ENCODE measurements at regions of chr17 and their contacts with region 1.

Region 1: DNA sequence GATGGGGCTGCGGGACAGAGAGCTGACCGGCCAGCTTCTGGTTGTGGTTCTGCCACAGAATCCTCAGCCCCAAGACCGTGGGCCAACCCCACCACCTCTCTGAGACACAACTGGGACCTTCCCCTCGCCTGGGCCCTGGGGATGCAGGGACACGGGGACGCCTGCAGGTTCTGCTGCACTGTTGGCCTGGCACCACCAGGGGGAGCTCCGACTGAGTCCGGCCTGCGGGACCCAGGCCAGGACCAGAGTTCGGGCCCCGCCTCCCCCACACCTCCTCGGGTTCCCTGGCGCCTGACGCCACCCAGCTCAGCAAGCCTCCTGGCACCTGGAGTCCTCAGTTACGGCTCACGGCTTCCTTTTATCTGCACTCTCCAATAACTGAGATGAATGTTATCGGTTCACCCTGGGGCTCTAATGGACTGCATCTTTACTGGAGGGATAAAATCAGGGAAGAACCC is 27.3 kb downstream of the TBC1D16 start:
- DNase-seq: peak; percentile 63 to 83
- ATAC-seq: peak; percentile 57 to 86 (median 78)
- H3K4me3 ChIP-seq: no peak overlapping the region
- H3K27ac ChIP-seq: no peak overlapping the region
- H3K4me1 ChIP-seq: peaks cover 0 to 18% (median 8%) of the 10 kb centered on the region in 9 donors
- H3K27me3 ChIP-seq: no peaks in the 10 kb centered on the region
- CTCF ChIP-seq: peak; percentile 82 to 97 (median 93)

Region 2: DNA sequence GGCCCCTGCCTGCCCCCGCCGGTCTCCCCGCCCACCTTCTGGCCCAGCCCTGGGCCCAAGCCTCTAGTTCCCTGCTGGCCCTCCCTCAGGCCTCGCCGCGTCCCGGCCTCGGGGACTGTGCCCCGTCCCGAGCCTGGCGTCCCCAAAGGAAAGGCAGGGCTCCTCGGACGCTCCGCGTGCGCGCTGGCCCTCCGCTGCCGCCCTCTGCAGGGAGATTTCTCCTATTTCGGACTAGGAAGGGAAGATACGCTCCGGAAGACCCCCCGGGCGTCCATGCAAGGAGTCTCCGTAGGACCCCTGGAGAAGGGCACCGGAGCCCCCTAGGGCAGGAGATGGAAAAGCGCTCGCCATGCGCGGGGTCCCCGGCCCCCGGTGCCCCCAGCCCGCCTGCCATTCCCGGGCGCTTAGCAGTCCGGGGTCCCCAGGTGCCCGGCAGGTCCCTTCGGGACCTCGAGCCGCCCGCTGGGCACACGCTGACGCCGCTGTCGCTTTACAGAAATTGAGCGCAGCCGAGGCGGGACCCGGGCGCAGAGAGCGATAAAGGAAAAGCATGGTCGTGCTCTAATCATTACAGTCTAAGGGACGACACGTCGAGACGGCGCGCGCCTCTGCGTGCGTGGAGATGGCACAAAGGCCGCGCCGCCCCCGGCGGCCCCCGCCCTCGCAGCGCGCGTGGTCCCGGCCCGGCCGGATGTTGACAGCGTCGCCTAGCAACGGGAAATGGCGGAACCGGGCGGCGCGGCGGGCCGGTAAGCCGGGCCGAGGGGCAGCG is 27.7 kb after region 1 on chr17 and contains the start of gene CCDC40:
- intact Hi-C with region 1: loop called in 1 of 10 experiments (anchors 2 kb)
- DNase-seq: peak; percentile 85 to 90
- ATAC-seq: peak; percentile 94 to 98 (median 96)
- H3K4me3 ChIP-seq: peak within 1 kb of the TSS; percentile 74 to 100 (median 88)
- H3K27ac ChIP-seq: peak within 1 kb of the TSS; percentile 79 to 96 (median 92)
- H3K4me1 ChIP-seq: peaks cover 2 to 28% (median 12%) of the 10 kb centered on the region in 9 donors
- H3K27me3 ChIP-seq: peaks cover 0 to 31% (median 0%) of the 10 kb centered on the region in 7 donors
- CTCF ChIP-seq: peak in 4 of 9 donors; percentile 6 to 48 (median 22)
- total RNA-seq, gene CCDC40: 3.4 to 8.9 (median 6.8) TPM

Region 3: DNA sequence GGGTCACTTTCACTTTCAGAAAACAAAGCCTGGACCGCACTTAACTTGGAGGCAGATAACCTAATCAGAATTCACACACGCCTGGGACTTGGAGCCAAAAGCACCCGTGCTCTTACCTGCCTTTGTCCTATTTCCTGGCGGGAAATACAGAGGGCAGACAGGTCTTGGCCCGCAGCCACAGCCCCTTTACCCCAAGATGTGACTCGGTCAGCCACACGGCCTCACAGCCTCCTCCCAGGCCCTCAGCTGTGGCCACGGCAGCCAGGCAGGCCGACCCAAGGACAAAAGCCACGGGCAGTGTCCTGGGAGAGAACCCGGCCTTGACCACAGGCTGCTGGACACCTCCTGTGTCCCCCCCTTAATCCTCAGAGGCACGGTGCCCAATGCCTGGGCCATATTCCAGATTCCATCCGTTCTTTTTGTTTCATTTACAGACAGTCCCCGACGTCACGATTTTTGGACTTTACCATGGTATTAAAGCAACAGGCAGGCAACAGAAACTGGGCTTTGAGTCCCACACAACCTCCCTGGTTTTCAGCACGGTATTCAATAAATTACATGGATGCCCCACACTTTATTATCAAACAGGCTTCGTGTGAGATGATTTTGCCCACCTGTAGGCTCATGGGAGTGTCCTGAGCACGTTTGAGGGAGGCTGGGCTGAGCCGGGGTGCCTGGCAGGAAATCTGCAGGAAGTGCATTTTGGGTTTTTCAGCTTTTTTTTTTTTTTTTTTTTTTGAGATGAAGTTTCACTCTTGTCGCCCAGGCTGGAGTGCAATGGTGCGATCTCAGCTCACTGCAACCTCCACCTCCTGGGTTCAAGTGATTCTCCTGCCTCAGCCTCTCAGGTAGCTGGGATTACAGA is 62.9 kb after region 1 on chr17:
- intact Hi-C with region 1: loop called in 1 of 10 experiments (anchors 5 kb)
- DNase-seq: peak; percentile 65 to 72
- ATAC-seq: peak; percentile 58 to 80 (median 74)
- H3K4me3 ChIP-seq: peak overlapping the region; percentile 8 to 58 (median 46)
- H3K27ac ChIP-seq: peak overlapping the region; percentile 71 to 95 (median 84)
- H3K4me1 ChIP-seq: peaks cover 17 to 44% (median 40%) of the 10 kb centered on the region in 9 donors
- H3K27me3 ChIP-seq: no peaks in the 10 kb centered on the region
- CTCF ChIP-seq: no peak

Region 4: GRCh38 chr17:80082403-80083135 is 74.2 kb after region 1 on chr17:
- intact Hi-C with region 1: loop called in 3 of 10 experiments (anchors 5 kb)
- DNase-seq: peak in 1 of 2 donors; percentile 63
- ATAC-seq: peak; percentile 29 to 66 (median 50)
- H3K4me3 ChIP-seq: peak overlapping the region in 2 of 10 donors; percentile 15 to 25
- H3K27ac ChIP-seq: no peak overlapping the region
- H3K4me1 ChIP-seq: peaks cover 0 to 9% (median 4%) of the 10 kb centered on the region in 9 donors
- H3K27me3 ChIP-seq: no peaks in the 10 kb centered on the region
- CTCF ChIP-seq: peak; percentile 66 to 85 (median 83)

Region 5: DNA sequence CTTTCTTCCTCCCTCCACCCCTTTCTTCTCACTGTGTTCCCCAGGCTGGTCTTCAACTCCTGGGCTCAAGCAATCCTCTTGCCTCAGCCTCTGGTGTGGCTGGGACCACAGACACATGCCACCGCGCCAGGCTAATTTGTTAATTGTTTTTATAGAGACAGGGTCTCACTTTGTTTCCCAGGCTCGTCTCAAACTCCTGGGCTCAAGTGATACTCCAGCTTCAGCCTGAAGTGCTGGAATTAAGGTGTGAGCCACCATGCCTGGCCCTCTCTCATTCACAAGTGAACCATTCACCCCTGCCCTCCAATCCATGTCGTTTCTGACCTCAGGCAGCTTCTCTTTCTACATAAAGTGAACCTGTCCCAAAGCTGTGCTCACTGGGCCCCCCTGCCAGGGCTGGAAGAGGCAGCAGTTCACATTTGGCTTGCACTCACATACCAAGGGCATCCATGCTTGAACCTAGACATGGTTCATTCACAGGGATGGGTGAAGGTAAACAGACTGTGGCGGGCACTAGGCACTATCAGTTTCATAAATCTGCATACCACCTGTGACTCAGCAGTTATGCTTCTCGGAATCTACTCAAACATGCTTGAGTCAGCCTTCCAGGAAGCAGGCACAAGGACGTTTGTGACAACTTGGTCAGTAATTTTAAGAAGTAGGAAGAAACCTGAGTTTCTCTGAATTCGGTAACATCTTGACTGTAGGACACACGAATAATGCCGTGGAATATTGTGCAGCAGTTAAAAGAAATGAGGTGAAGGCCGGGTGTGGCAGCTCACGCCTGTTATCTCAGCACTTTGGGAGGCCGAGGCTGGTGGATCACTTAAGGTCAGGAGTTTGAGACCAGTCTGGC is 246.2 kb after region 1 on chr17:
- intact Hi-C with region 1: loop called in 1 of 10 experiments (anchors 5 kb)
- DNase-seq: no peak
- ATAC-seq: peak in 2 of 8 donors; percentile 10 to 43
- H3K4me3 ChIP-seq: peak overlapping the region in 1 of 10 donors; percentile 6
- H3K27ac ChIP-seq: peak overlapping the region in 3 of 10 donors; percentile 4 to 93 (median 20)
- H3K4me1 ChIP-seq: peaks cover 0 to 38% (median 2%) of the 10 kb centered on the region in 9 donors
- H3K27me3 ChIP-seq: no peaks in the 10 kb centered on the region
- CTCF ChIP-seq: no peak

Measured in heart right ventricle (tissue), 16 donors.